ENCODE measurements at regions of chr13 and their contacts with region 1.

Region 1: GRCh38 chr13:74133657-74134201 is 475 bp downstream of the KLF12 start:
- DNase-seq: peak; percentile 77 to 99 (median 94)
- ATAC-seq: peak; percentile 62 to 69
- H3K4me3 Mint-ChIP-seq: peak overlapping the region in 9 of 10 donors; percentile 93 to 100 (median 97)
- H3K27ac Mint-ChIP-seq: peak overlapping the region in 9 of 10 donors; percentile 96 to 100 (median 99)
- H3K4me1 Mint-ChIP-seq: peaks cover 16 to 42% (median 35%) of the 10 kb centered on the region in 4 donors
- H3K27me3 Mint-ChIP-seq: peaks cover 0 to 2% (median 0%) of the 10 kb centered on the region in 5 donors

Region 2: GRCh38 chr13:73984949-73985691 is 148.6 kb before region 1 on chr13:
- POLR2A ChIA-PET with region 1: interaction called, 29 read pairs
- DNase-seq: peak; percentile 64 to 94 (median 88)
- ATAC-seq: peak; percentile 92 to 93
- H3K4me3 Mint-ChIP-seq: peak overlapping the region in 9 of 10 donors; percentile 66 to 91 (median 80)
- H3K27ac Mint-ChIP-seq: peak overlapping the region in 2 of 10 donors; percentile 96 to 98
- H3K4me1 Mint-ChIP-seq: peaks cover 35 to 43% (median 37%) of the 10 kb centered on the region in 4 donors
- H3K27me3 Mint-ChIP-seq: no peaks in the 10 kb centered on the region

Region 3: DNA sequence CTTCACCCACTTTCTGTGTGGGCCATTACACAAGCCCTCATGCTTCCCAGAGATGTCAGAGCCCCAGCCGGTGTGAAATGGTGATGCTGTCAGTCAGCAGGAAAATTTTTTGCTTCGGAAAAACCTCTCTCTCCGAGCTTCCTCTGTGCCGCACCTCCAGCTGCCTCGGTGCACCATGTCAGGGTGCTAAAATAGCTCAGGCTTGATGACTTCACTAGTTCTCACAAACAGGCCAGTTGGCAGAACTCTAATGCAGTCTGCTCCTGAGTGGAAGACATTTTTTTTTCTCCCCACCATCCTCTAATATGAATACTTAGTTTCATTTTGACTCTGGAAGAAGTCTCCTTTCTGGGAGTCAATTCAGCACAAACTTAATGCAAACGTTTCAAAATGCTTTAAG is 70.8 kb before region 1 on chr13:
- POLR2A ChIA-PET with region 1: interaction called, 19 read pairs
- DNase-seq: no peak
- ATAC-seq: no peak
- H3K4me3 Mint-ChIP-seq: peak overlapping the region; percentile 23 to 82 (median 68)
- H3K27ac Mint-ChIP-seq: peak overlapping the region; percentile 35 to 91 (median 77)
- H3K4me1 Mint-ChIP-seq: peaks cover 45 to 91% (median 82%) of the 10 kb centered on the region in 4 donors
- H3K27me3 Mint-ChIP-seq: no peaks in the 10 kb centered on the region

Region 4: GRCh38 chr13:74230984-74231501 is 97.3 kb after region 1 on chr13:
- POLR2A ChIA-PET with region 1: interaction called, 86 read pairs
- DNase-seq: peak in 4 of 10 donors; percentile 13 to 72 (median 64)
- ATAC-seq: peak; percentile 79 to 88
- H3K4me3 Mint-ChIP-seq: peak overlapping the region; percentile 69 to 94 (median 88)
- H3K27ac Mint-ChIP-seq: peak overlapping the region; percentile 85 to 98 (median 92)
- H3K4me1 Mint-ChIP-seq: peaks cover 12 to 38% (median 34%) of the 10 kb centered on the region in 4 donors
- H3K27me3 Mint-ChIP-seq: no peaks in the 10 kb centered on the region

Region 5: GRCh38 chr13:74287724-74288169 is 154.0 kb after region 1 on chr13:
- POLR2A ChIA-PET with region 1: interaction called, 157 read pairs
- DNase-seq: peak; percentile 73 to 98 (median 89)
- ATAC-seq: peak; percentile 63 to 65
- H3K4me3 Mint-ChIP-seq: peak overlapping the region; percentile 72 to 90 (median 86)
- H3K27ac Mint-ChIP-seq: peak overlapping the region; percentile 92 to 100 (median 96)
- H3K4me1 Mint-ChIP-seq: peaks cover 28 to 76% (median 66%) of the 10 kb centered on the region in 4 donors
- H3K27me3 Mint-ChIP-seq: peaks cover 0 to 2% (median 0%) of the 10 kb centered on the region in 5 donors